ENCODE measurements at regions of chr1 and their contacts with region 1.

Region 1: GRCh38 chr1:119008483-119009311 is 20.6 kb upstream of the TBX15 start:
- DNase-seq: no peak
- ATAC-seq: peak; percentile 27
- H3K4me3 Mint-ChIP-seq: peak overlapping the region; percentile 65
- H3K27ac Mint-ChIP-seq: no peak overlapping the region
- H3K4me1 Mint-ChIP-seq: peaks cover 37% of the 10 kb centered on the region
- H3K27me3 Mint-ChIP-seq: peaks cover 92% of the 10 kb centered on the region
- CTCF ChIP-seq: peak; percentile 53

Region 2: DNA sequence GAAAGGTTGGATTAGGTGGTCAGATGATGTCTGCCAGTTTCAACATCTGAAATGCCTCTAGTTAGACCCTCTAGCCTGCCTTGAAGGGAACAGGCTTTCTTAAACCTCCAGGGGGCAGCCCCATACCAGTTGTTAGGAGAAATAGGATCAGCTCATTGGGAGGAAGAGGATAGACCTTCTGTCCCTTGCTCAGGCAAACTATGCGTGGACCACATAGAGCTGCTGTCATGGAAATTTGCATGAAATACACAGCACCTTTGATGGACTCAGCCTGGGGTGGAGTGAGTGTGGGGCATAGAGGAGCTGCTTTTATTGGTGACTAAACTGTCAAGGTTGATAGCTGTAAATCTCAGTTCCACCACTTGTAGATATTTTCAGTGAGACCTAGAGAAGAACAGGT is 785.3 kb before region 1 on chr1:
- CTCF ChIA-PET with region 1: interaction called, 10 read pairs
- POLR2A ChIA-PET with region 1: no interaction called
- DNase-seq: peak; percentile 64
- ATAC-seq: peak; percentile 95
- H3K4me3 Mint-ChIP-seq: no peak overlapping the region
- H3K27ac Mint-ChIP-seq: no peak overlapping the region
- H3K4me1 Mint-ChIP-seq: peaks cover 3% of the 10 kb centered on the region
- H3K27me3 Mint-ChIP-seq: no peaks in the 10 kb centered on the region; the same call in 1 of the 2 replicates
- CTCF ChIP-seq: peak; percentile 49

Region 3: DNA sequence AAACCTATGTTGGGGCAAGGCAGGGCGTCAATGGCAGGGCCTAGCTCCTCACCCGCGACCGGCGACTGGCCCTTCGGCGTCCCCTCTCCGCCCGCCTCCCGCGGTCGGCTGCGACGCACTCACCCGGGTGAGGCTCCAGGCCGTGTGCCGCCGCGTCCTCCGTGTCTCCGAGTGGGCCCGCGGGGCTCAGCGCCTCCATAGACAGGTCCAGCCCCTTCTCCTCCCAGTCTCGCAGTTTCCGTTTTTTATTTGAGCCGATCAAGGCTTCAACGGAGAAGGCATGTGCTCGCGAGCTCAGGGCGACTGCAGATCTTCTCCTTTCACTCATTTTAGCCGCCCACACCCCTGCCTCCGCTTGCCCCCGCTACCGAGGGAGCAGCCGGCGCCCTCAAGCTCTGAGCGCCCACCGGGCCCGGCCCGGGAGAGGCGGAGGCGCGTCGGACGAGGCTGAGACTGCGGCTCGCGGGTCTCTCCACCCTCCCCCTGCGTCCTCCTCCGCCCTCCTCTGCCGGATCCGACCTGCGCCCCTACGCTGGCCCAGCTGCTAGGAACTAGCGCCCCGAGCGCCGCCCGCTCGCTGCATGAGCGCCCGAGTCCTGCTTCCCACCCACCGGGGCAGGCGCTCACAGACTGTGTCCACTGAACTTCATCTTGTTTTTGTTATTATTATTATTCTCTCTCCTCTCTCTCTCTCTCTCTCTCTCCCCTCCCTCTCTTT is 21.1 kb before region 1 on chr1:
- CTCF ChIA-PET with region 1: interaction called, 50 read pairs
- POLR2A ChIA-PET with region 1: interaction called, 3 read pairs
- DNase-seq: peak; percentile 66
- ATAC-seq: peak; percentile 18
- H3K4me3 Mint-ChIP-seq: peak overlapping the region; percentile 74
- H3K27ac Mint-ChIP-seq: no peak overlapping the region
- H3K4me1 Mint-ChIP-seq: peaks cover 89% of the 10 kb centered on the region
- H3K27me3 Mint-ChIP-seq: peaks cover 100% of the 10 kb centered on the region
- CTCF ChIP-seq: no peak

Region 4: GRCh38 chr1:118992868-118993699 is 15.6 kb before region 1 on chr1:
- CTCF ChIA-PET with region 1: interaction called, 50 read pairs
- POLR2A ChIA-PET with region 1: interaction called, 3 read pairs
- DNase-seq: peak; percentile 56
- ATAC-seq: peak; percentile 9
- H3K4me3 Mint-ChIP-seq: peak overlapping the region; percentile 47
- H3K27ac Mint-ChIP-seq: no peak overlapping the region
- H3K4me1 Mint-ChIP-seq: peaks cover 59% of the 10 kb centered on the region
- H3K27me3 Mint-ChIP-seq: peaks cover 100% of the 10 kb centered on the region
- CTCF ChIP-seq: no peak

Region 5: DNA sequence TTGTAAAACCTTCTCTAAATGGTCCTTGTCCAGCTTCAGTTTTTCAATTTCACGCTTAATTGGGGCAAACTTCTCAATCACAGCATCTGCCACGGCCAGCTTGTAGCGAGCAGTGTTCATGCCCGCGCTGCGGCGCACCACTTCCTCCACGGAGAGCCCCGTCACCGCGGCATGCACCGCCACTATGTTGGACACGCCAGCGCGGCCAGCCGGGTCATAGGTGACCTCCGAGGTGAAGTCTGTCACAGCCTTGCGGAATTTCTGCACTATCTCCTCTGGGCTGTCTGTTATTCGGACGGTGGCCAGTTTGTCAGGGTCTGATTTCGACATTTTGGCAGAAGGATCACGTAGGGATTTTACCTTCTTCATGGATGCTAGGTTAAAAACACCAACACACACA is 24.3 kb after region 1 on chr1:
- CTCF ChIA-PET with region 1: no interaction called
- POLR2A ChIA-PET with region 1: no interaction called
- DNase-seq: no peak
- ATAC-seq: no peak
- H3K4me3 Mint-ChIP-seq: no peak overlapping the region
- H3K27ac Mint-ChIP-seq: no peak overlapping the region
- H3K4me1 Mint-ChIP-seq: no peaks in the 10 kb centered on the region
- H3K27me3 Mint-ChIP-seq: no peaks in the 10 kb centered on the region
- CTCF ChIP-seq: no peak

Measured in WTC11 (cell line).